Ascending aorta (tissue), 2 donors: ENCODE measurements at regions of chr19 and their contacts with region 1.

Region 1: DNA sequence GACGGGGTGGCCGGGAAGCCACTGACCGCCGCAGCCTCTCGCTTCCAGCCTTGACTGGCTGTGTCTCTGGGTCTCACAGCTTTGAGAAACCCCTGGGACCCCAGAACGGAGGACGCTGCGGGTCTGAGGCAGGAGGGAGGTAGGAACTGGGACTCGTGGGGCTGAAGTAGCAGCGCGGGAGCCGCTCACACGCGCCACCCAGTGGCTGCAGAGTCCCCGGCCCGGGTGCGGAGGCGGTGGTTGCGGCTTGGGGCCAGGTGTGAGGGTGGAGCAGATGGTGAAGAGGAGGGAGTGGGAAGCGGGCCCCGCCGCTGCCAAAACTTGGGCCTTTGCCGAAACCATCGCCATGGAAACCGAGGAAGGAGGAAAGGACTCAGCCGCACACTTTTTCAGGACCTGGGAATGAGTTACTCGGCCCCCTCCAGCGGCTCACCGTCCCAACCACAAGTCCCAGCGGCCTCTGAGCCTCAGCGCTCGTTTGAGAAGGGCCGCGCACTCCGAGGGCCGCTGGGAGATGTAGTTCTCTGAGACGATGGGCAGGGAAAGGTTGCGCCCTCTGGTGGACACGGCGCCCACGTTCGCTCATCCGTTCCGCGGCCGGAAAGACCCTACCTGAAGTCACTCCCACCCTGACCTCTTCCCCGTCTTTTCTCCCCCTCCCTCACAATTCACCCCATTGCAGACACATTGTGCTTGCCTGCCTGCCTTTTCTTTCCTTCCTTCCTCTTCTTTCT is 2.2 kb upstream of the SLC17A7 start:
- DNase-seq: peak; percentile 76 to 98
- H3K4me3 ChIP-seq: peak overlapping the region; percentile 55 to 75
- H3K27ac ChIP-seq: peak overlapping the region; percentile 62 to 66
- H3K4me1 ChIP-seq: no peaks in the 10 kb centered on the region
- H3K27me3 ChIP-seq: peaks cover 10% of the 10 kb centered on the region
- CTCF ChIP-seq: peak; percentile 77 to 90 (median 78)

Region 2: GRCh38 chr19:49224856-49225255 is 218.7 kb before region 1 on chr19:
- intact Hi-C with region 1: loop called (anchors 2 kb)
- DNase-seq: no peak
- H3K4me3 ChIP-seq: no peak overlapping the region
- H3K27ac ChIP-seq: no peak overlapping the region
- H3K4me1 ChIP-seq: no peaks in the 10 kb centered on the region
- H3K27me3 ChIP-seq: no peaks in the 10 kb centered on the region
- CTCF ChIP-seq: no peak

Region 3: DNA sequence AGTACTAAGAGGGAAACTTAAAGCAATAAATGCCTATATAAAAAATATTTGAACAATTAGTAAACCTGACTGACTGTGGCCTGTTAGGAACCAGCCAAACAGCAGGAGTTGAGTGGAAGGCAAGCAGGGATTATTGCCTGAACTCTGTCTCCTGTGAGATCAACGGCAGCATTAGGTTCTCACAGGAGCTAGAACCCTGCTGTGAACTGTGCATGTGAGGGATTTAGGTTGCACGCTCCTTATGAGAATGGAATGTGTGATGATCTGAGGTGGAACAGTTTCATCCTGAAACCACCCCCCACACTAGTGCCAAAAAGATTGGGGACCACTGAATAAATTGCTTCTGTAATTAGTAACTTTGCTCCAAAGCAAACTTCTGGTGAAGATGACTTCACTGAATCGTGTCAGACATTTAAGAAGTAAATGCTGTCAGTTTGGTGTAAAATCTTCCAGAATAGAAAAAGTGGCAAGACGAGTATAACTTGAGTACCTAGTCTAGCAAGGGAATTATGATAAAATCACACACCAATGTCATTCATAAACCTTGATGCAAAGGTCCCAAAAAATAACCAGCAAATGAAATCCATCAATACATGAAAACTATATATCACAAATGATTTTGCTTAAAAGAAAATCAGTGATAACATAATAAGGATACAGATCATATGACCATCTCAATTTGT is 172.3 kb before region 1 on chr19:
- intact Hi-C with region 1: loop called (anchors 1 kb)
- DNase-seq: no peak
- H3K4me3 ChIP-seq: no peak overlapping the region
- H3K27ac ChIP-seq: no peak overlapping the region
- H3K4me1 ChIP-seq: no peaks in the 10 kb centered on the region
- H3K27me3 ChIP-seq: no peaks in the 10 kb centered on the region
- CTCF ChIP-seq: no peak

Region 4: GRCh38 chr19:49363268-49364082 is 80.1 kb before region 1 on chr19 and contains the start of gene DKKL1:
- intact Hi-C with region 1: loop called (anchors 1 kb)
- DNase-seq: peak; percentile 98 to 99
- H3K4me3 ChIP-seq: peak within 1 kb of the TSS; percentile 45 to 76
- H3K27ac ChIP-seq: peak within 1 kb of the TSS; percentile 88 to 89
- H3K4me1 ChIP-seq: peaks cover 0 to 7% of the 10 kb centered on the region in 2 donors
- H3K27me3 ChIP-seq: no peaks in the 10 kb centered on the region
- CTCF ChIP-seq: no peak
- total RNA-seq, gene DKKL1: not detected

Region 5: DNA sequence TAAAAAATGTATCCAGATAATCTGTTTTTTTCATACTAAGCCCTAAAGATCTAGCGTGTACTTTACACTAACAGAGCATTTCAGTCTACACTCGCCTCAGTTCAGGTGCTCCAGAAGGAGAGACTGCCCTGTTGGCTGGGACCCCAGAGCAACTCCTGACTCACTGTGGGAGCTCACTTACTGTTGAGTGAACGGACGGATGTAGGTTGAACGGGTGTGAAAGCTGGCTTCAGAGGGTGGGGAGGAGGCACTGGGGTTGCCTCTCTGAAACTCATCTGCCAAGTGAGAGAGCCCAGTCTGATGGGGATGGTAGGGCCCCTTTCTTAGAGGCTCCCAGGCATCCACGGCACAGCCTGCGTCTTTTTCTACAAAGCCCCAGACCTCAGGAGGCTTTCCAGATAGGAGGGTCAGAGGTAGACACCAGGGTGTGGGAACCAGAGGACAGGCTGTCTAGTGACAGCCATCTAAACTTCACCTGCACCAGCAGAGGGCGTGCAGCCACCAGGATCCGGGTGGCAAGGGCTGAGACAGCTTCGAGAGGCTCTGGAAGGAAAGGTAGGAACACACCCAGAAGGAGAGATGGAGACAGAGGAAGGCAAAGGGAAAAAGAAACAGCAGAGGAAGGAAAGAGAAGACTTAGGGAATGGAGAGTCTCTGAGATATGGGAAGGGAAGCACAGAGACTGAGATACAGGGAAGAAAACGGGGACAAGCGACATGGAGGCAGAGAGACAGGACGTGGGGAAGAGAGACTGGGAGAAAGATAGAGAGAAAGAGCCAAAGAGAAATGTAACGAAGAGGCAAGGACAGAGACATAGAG is 51.7 kb before region 1 on chr19:
- intact Hi-C with region 1: loop called (anchors 1 kb)
- DNase-seq: peak; percentile 23 to 77
- H3K4me3 ChIP-seq: no peak overlapping the region
- H3K27ac ChIP-seq: no peak overlapping the region
- H3K4me1 ChIP-seq: no peaks in the 10 kb centered on the region
- H3K27me3 ChIP-seq: no peaks in the 10 kb centered on the region
- CTCF ChIP-seq: peak; percentile 74 to 83 (median 76)